ENCODE measurements at regions of chr16 and their contacts with region 1.

Region 1: GRCh38 chr16:71461686-71462648 is at the start of gene ZNF23:
- DNase-seq: peak; percentile 96
- CTCF ChIP-seq: no peak

Region 2: DNA sequence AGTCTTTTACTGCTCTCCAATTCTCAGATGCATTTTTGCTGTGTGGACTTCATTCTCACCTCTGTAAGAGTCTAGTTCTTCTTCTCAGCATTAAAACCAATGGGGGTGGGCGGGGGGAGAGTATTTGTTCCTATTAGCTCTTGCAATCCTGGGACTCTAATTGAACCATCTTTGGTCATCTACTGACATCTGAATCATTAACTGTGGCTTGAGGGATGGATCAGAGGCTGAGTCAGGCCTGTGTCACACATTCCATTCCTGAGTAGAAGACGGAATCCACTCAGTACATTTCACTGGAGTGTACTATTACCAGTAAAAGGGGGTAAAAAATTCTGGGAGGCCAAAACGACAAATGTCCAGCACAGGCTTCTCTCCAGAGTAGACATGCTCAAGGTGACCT is 12.9 kb after region 1 on chr16:
- CTCF ChIA-PET with region 1: interaction called, 18 read pairs
- POLR2A ChIA-PET with region 1: no interaction called
- DNase-seq: no peak
- CTCF ChIP-seq: no peak

Region 3: DNA sequence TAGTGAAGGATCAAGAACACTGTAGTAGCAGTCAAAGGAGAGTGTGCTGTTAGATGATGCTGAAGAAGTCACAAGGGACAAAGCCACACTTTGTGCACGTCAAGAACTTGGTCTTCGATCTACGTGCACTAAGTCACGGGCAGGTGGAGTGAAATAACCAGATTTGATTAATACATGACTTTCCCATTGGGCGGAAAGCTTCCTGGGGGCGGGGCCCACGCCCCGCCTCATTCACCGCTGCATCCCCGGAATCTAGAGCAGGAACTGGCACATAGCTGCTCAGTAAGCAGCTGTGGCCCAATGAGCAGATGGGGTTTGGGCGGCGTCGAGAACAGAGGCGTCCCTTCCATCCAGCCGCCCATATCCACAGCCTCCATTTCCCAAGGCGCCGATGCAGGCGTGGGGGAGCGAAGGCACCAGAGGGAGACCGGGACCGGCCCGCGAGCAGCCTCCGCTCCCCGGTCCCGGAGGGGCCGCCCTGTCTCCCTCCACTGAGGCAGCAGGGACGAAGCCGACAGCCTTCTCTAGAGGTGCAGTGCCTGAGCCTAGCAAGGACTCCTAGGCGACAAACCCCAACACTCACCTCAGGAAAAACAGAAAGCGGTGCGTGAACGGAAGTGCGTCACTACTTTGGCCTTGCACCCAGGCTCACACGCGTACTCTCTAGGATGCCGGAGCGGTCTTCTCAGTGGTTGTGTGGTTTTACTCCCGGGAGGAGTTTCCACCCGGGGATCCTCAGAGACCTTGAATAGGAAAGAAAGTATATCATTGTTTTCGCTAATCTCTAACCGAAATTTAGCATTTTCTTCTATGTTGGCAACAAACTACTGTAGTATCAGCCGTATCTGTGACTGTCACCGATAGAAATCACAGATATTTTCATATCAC is 22.3 kb after region 1 on chr16:
- CTCF ChIA-PET with region 1: interaction called, 11 read pairs
- POLR2A ChIA-PET with region 1: interaction called, 4 read pairs
- DNase-seq: peak; percentile 84
- CTCF ChIP-seq: no peak